Activated T-helper 1 cell treated with anti-CD3 and anti-CD28 coated beads, Interleukin-12 subunit alpha, Interleukin-12 subunit beta, Interleukin-2, Interleukin-4 antibody, amounts not matched to agents 30 ng/mL and 10 ng/mL and 1 ng/mL, durations not matched to agents 14 hours and 24 hours and 36 hours (primary cell): ENCODE measurements at regions of chr10 and their contacts with region 1.

Region 1: DNA sequence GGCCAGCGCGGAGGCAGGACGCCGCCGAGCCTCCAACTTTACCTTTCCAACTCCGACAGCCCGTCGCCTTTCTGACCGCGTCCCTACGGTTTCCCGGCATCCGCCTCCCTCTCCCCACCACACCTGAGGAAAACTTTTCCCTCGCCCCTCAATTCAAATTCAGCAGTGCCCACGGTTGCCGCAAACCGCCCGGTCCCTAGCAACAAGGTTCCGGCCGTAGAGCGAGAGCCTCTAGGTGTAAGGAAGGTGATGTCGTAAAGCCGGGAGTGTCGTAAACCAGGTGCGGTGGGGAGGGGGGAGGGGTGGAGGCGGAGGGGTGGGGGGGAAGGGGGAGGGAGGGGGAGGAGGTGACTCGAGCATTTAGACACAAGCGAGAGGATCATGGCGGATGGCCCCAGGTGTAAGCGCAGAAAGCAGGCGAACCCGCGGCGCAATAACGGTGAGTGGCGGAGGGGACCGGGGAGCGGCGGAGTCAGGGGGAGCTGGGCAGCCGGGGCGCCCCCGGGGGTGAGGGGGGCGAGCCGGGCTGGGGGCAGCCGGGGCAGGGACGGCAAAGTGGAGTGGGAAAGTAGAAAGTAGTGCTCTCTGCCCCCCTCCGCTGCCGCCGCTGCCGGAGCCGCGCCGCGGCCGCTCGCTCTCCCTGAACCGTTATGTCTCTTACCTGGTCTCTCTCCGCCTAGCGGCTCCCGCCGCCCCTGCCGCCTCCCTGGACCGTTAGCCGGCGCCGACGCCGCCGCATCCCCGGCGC is at the start of gene ZEB1:
- DNase-seq: peak; percentile 86
- H3K4me3 Mint-ChIP-seq: peak within 1 kb of the TSS; percentile 97
- H3K27ac Mint-ChIP-seq: peak within 1 kb of the TSS; percentile 100
- H3K4me1 Mint-ChIP-seq: peaks cover 60% of the 10 kb centered on the region
- H3K27me3 Mint-ChIP-seq: no peaks in the 10 kb centered on the region
- total RNA-seq, gene ZEB1: 70.8 and 79.8 TPM in 2 replicates

Region 2: GRCh38 chr10:30783939-30784500 is 535.0 kb before region 1 on chr10:
- intact Hi-C with region 1: loop called (anchors 1 kb)
- DNase-seq: peak; percentile 67
- H3K4me3 Mint-ChIP-seq: peak overlapping the region; percentile 79
- H3K27ac Mint-ChIP-seq: peak overlapping the region; percentile 75
- H3K4me1 Mint-ChIP-seq: peaks cover 29% of the 10 kb centered on the region
- H3K27me3 Mint-ChIP-seq: peaks cover 7% of the 10 kb centered on the region

Region 3: GRCh38 chr10:31083765-31084184 is 235.3 kb before region 1 on chr10:
- intact Hi-C with region 1: loop called (anchors 1 kb)
- DNase-seq: peak; percentile 58
- H3K4me3 Mint-ChIP-seq: no peak overlapping the region
- H3K27ac Mint-ChIP-seq: peak overlapping the region; percentile 11
- H3K4me1 Mint-ChIP-seq: peaks cover 24% of the 10 kb centered on the region
- H3K27me3 Mint-ChIP-seq: peaks cover 4% of the 10 kb centered on the region

Region 4: GRCh38 chr10:31340343-31340742 is 21.3 kb after region 1 on chr10:
- intact Hi-C with region 1: loop called (anchors 1 kb)
- DNase-seq: no peak
- H3K4me3 Mint-ChIP-seq: no peak overlapping the region
- H3K27ac Mint-ChIP-seq: no peak overlapping the region
- H3K4me1 Mint-ChIP-seq: no peaks in the 10 kb centered on the region
- H3K27me3 Mint-ChIP-seq: no peaks in the 10 kb centered on the region

Region 5: DNA sequence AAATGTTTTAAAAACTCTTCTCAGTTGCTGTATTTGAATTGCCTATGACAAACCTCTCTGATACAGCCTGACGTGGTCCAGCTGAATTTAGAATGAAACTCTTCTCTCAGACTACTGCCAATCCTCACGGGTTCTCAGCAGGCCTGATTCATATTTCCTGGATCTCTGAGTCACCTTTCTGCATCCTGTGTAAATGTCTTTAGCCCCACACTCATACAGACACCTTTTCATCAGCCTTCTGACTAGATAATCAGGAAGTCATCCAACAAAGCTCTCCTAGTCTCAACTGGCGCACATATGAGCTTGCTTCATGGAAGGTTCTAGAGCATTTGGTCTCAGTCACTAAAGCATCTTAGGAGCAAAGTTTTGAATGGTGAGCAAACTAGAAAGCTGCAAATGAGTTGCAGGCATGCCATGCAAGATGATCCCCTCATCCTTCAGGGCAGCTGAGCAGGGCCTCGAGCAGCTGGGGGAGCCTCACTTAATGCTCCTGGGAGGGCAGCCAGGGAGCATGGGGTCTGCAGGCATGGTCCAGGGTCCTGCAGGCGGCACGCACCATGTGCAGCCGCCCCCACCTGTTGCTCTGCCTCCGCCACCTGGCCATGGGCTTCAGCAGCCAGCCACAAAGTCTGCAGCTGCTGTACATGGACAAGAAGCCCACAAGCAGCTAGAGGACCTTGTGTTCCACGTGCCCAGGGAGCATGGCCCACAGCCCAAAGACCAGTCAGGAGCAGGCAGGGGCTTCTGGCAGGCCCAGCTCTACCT is 426.8 kb after region 1 on chr10:
- intact Hi-C with region 1: loop called (anchors 1 kb)
- DNase-seq: peak; percentile 49
- H3K4me3 Mint-ChIP-seq: peak overlapping the region; percentile 2
- H3K27ac Mint-ChIP-seq: peak overlapping the region; percentile 82
- H3K4me1 Mint-ChIP-seq: peaks cover 27% of the 10 kb centered on the region
- H3K27me3 Mint-ChIP-seq: no peaks in the 10 kb centered on the region

Region 6: DNA sequence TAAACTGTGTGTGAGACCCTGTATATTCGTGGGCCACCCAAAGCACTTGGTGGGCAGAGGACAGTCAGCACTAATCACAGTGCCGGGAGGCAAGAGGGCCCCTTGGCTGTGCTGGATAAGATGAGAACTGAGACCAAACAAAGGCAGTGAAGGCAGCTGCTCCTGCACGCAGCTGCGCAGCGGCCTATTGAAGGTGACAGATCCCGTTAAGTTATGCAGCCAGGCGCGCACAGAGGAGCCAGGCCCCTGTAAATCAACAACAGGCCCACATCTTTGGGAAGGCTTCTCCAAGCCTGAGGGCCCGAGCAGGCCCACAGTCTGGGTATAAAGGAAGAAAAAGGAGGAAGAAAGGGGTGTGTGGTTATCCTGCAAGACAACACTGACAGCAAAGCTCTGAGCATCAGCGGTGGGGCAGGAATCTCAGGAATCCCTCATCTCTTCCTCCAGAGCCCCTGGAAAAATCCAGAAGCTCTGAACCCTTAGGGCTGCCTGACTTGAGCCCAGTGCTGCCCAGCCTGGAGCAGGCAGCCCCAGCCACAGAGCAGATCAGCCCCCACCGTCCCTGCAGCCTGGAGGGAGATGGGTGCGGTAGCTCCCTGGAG is 455.4 kb after region 1 on chr10:
- intact Hi-C with region 1: no loop called
- DNase-seq: no peak
- H3K4me3 Mint-ChIP-seq: no peak overlapping the region
- H3K27ac Mint-ChIP-seq: no peak overlapping the region
- H3K4me1 Mint-ChIP-seq: no peaks in the 10 kb centered on the region
- H3K27me3 Mint-ChIP-seq: peaks cover 3% of the 10 kb centered on the region